Mammary epithelial cell (primary cell): ENCODE measurements at regions of chr21 and their contacts with region 1.

Region 1: DNA sequence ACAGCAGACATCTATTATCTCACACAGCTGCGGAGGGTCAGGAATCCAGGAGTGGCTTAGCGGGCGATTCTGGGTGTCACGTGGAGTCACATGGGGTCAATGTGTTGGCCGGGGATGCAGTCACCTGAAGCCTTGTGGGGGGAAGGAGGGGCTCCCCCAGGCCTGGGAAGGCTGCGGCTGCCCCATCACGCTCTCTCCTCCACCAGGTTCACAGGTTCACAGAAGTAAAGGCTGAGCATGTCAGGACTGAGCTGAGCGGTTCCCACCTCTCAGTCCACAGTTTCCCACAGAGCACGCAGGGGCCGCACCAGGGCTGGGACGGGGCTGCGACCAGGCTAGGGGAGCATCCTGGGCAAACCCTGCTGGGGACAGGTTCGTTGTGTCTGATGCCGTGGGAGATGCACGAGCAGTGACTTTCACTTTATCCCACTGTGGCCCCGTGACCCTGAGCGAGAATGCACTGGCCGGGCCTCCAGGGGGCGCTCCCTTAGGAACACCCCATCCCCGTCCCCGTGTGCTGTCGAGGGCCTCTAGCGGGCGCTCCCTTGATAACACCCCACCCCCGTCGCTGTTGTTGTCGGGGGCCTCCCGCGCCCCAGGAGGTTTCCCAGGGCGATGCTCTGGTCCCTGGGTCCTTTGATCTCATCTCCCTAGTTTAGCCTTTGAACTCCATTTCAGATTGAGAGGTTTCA is 73.2 kb upstream of the TRAPPC10 start:
- DNase-seq: peak; percentile 46
- H3K4me3 ChIP-seq: peak overlapping the region; percentile 43 to 59 (median 54)
- H3K27ac ChIP-seq: no peak overlapping the region
- H3K4me1 ChIP-seq: peaks cover 4% of the 10 kb centered on the region
- H3K27me3 ChIP-seq: no peaks in the 10 kb centered on the region
- CTCF ChIP-seq: peak; percentile 96 to 100

Region 2: DNA sequence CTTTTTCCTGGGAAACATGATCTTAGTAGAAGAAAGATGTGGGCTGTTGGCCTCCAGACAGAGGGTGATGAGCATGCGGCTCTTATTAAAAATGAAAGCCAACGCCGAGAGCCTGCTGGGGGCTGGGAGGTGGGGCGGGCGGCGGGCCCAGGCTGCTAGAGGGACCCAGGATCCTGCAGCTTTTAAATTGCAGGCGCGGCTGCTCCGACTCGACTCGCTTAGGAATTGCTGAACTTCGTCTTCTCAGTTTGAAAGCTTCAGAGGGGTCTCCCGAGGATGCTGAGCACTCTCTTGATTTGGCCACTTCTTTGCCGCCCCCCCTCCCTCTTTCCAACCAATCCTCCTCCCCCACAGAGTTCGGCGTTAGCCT is 72.7 kb before region 1 on chr21:
- CTCF ChIA-PET with region 1: interaction called, 5 read pairs
- dilution Hi-C with region 1: no loop called
- in situ Hi-C with region 1: no loop called
- intact Hi-C with region 1: loop called (anchors 1 kb)
- DNase-seq: peak; percentile 29
- H3K4me3 ChIP-seq: peak overlapping the region; percentile 55 to 62 (median 58)
- H3K27ac ChIP-seq: no peak overlapping the region
- H3K4me1 ChIP-seq: peaks cover 14% of the 10 kb centered on the region
- H3K27me3 ChIP-seq: no peaks in the 10 kb centered on the region
- CTCF ChIP-seq: no peak

Region 3: GRCh38 chr21:43975495-43975993 is 36.6 kb after region 1 on chr21:
- CTCF ChIA-PET with region 1: interaction called, 5 read pairs
- dilution Hi-C with region 1: no loop called
- in situ Hi-C with region 1: no loop called
- intact Hi-C with region 1: loop called (anchors 1 kb)
- DNase-seq: peak; percentile 45
- H3K4me3 ChIP-seq: peak overlapping the region; percentile 19 to 42 (median 37)
- H3K27ac ChIP-seq: no peak overlapping the region
- H3K4me1 ChIP-seq: peaks cover 7% of the 10 kb centered on the region
- H3K27me3 ChIP-seq: no peaks in the 10 kb centered on the region
- CTCF ChIP-seq: peak; percentile 91 to 96

Region 4: DNA sequence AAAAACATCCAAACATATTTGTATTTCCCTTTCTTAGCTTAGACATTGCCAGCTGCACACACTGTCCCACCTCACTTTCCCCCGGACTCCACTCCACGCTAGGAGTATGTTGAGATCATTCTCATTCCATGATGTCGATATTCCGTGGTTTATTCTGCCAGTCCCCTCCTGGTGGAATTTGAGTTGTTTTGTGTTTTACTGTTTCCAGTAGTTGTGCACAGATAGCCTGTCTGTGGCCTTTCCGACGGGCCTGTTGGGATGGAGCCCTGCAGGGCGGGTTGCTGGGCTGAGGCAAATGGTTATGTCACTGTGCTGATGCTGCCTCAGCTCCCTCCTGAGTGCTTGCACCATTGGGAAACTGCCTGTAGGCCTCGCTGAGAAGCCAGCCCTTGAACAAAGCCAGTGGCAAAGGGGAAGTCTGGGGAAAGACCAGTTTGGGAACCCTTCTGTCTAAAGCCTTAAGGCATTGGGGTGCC is 86.0 kb after region 1 on chr21:
- CTCF ChIA-PET with region 1: no interaction called
- dilution Hi-C with region 1: no loop called
- in situ Hi-C with region 1: no loop called
- intact Hi-C with region 1: no loop called
- DNase-seq: peak; percentile 12
- H3K4me3 ChIP-seq: no peak overlapping the region
- H3K27ac ChIP-seq: no peak overlapping the region
- H3K4me1 ChIP-seq: peaks cover 2% of the 10 kb centered on the region
- H3K27me3 ChIP-seq: no peaks in the 10 kb centered on the region
- CTCF ChIP-seq: no peak

Region 5: GRCh38 chr21:44686000-44686781 is 747.3 kb after region 1 on chr21:
- CTCF ChIA-PET with region 1: no interaction called
- dilution Hi-C with region 1: no loop called
- in situ Hi-C with region 1: no loop called
- intact Hi-C with region 1: no loop called
- DNase-seq: no peak
- H3K4me3 ChIP-seq: no peak overlapping the region
- H3K27ac ChIP-seq: no peak overlapping the region
- H3K4me1 ChIP-seq: no peaks in the 10 kb centered on the region
- H3K27me3 ChIP-seq: peaks cover 4% of the 10 kb centered on the region
- CTCF ChIP-seq: no peak